ENCODE measurements at regions of chr13 and their contacts with region 1.

Region 1: GRCh38 chr13:31909864-31910551 is 121.6 kb upstream of the FRY start:
- DNase-seq: peak; percentile 74
- H3K4me3 Mint-ChIP-seq: no peak overlapping the region
- H3K27ac Mint-ChIP-seq: no peak overlapping the region
- H3K4me1 Mint-ChIP-seq: peaks cover 12% of the 10 kb centered on the region
- H3K27me3 Mint-ChIP-seq: no peaks in the 10 kb centered on the region
- CTCF ChIP-seq: peak; percentile 80

Region 2: GRCh38 chr13:31930901-31931522 is 21.0 kb after region 1 on chr13:
- CTCF ChIA-PET with region 1: interaction called, 19 read pairs
- POLR2A ChIA-PET with region 1: no interaction called
- intact Hi-C with region 1: no loop called
- DNase-seq: peak; percentile 45
- H3K4me3 Mint-ChIP-seq: no peak overlapping the region
- H3K27ac Mint-ChIP-seq: no peak overlapping the region
- H3K4me1 Mint-ChIP-seq: no peaks in the 10 kb centered on the region
- H3K27me3 Mint-ChIP-seq: no peaks in the 10 kb centered on the region
- CTCF ChIP-seq: no peak

Region 3: DNA sequence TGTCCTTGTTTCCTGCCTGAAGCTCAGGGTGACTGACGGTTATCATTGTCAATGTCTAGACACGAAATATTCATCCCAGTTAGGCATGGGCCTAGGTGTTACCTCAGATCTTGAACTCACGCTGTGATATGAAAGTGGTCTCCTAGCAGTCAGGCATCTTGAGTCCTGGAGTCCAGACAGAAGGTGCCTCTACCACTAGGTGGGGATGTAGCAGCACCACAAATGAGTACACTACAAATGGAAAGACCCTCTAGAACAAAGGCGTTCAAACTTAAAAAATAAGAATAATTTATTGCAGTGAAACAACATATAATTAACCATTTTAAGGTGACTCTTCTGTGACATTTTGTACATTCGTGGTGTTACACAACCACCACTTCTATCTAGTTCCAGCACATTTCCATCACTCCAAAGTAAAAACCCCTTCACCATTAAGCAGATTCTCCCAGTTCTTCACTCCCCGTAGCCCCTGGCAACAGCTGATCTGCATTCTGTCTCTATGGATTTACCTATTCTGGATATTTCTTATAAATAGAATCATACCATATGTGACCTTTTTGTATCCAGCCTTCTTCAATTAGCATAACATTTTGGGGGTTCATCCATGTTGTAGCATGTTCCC is 109.7 kb after region 1 on chr13:
- CTCF ChIA-PET with region 1: interaction called, 9 read pairs
- POLR2A ChIA-PET with region 1: interaction called, 6 read pairs
- intact Hi-C with region 1: loop called (anchors 10 kb)
- DNase-seq: peak; percentile 63
- H3K4me3 Mint-ChIP-seq: no peak overlapping the region
- H3K27ac Mint-ChIP-seq: no peak overlapping the region
- H3K4me1 Mint-ChIP-seq: no peaks in the 10 kb centered on the region
- H3K27me3 Mint-ChIP-seq: no peaks in the 10 kb centered on the region
- CTCF ChIP-seq: peak; percentile 64

Region 4: DNA sequence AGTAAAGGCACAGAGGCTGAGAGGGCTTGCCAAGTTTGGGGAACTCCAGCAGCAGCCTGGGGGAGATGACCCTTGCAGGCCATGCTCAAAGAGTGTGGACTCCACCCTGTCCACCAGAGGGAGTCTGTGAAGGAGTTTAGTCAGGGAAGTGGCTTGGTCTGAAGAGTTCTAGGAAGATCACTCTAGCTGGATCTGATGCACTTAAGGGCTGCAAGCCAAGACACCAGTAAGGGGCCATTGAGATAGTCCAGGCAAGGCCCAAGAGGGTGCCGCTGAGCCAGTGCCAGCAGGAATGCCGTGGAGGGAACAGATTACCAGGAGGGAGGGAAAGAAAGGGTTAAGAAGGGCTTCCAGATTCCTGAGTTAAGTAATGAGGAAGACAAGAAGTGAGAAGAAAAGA is 336.5 kb after region 1 on chr13:
- CTCF ChIA-PET with region 1: interaction called, 21 read pairs
- POLR2A ChIA-PET with region 1: interaction called, 5 read pairs
- intact Hi-C with region 1: loop called (anchors 1 kb)
- DNase-seq: peak; percentile 86
- H3K4me3 Mint-ChIP-seq: no peak overlapping the region
- H3K27ac Mint-ChIP-seq: no peak overlapping the region
- H3K4me1 Mint-ChIP-seq: peaks cover 8% of the 10 kb centered on the region
- H3K27me3 Mint-ChIP-seq: no peaks in the 10 kb centered on the region
- CTCF ChIP-seq: peak; percentile 74

Region 5: GRCh38 chr13:32310134-32310706 is 400.2 kb after region 1 on chr13:
- CTCF ChIA-PET with region 1: interaction called, 16 read pairs
- POLR2A ChIA-PET with region 1: interaction called, 7 read pairs
- intact Hi-C with region 1: loop called (anchors 2 kb)
- DNase-seq: peak; percentile 72
- H3K4me3 Mint-ChIP-seq: no peak overlapping the region
- H3K27ac Mint-ChIP-seq: no peak overlapping the region
- H3K4me1 Mint-ChIP-seq: no peaks in the 10 kb centered on the region
- H3K27me3 Mint-ChIP-seq: no peaks in the 10 kb centered on the region
- CTCF ChIP-seq: peak; percentile 54

Region 6: DNA sequence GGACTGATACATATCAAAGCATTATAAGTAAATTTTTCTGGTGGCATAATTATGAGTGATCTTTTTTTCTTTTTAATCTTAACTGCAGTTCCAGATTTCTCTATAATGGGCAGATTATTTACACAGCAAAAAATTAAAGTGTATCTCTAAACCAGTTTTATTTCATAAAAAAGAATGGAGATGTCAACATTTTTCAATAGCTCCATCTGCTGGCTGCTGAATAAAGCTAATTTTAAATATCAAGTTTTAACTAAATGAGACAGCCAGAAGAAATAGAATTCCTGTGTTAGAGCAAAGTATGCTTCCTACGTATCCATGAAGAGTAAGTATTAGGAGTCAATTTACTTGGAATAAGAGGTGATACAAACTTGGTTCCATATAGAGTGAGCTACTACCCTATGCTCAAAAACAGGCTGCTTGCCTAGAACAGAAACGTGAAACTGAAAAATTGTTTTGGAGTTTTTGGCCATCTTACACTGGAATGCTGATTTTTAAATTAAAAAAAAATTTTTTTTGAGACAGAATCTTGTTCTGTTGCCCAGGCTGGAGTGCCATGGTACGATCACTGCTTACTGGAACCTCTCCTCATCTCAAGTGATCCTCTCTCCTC is 671.3 kb after region 1 on chr13:
- CTCF ChIA-PET with region 1: interaction called, 31 read pairs
- POLR2A ChIA-PET with region 1: interaction called, 14 read pairs
- intact Hi-C with region 1: no loop called
- DNase-seq: peak; percentile 27
- H3K4me3 Mint-ChIP-seq: no peak overlapping the region
- H3K27ac Mint-ChIP-seq: no peak overlapping the region
- H3K4me1 Mint-ChIP-seq: peaks cover 8% of the 10 kb centered on the region
- H3K27me3 Mint-ChIP-seq: no peaks in the 10 kb centered on the region
- CTCF ChIP-seq: peak; percentile 36

Region 7: GRCh38 chr13:32624441-32624840 is 714.4 kb after region 1 on chr13:
- CTCF ChIA-PET with region 1: no interaction called
- POLR2A ChIA-PET with region 1: no interaction called
- intact Hi-C with region 1: no loop called
- DNase-seq: no peak
- H3K4me3 Mint-ChIP-seq: no peak overlapping the region
- H3K27ac Mint-ChIP-seq: no peak overlapping the region
- H3K4me1 Mint-ChIP-seq: peaks cover 13% of the 10 kb centered on the region
- H3K27me3 Mint-ChIP-seq: no peaks in the 10 kb centered on the region
- CTCF ChIP-seq: no peak